ENCODE measurements at regions of chr3 and their contacts with region 1.

Region 1: GRCh38 chr3:12455740-12456139 is 28.5 kb upstream of the TSEN2 start:
- DNase-seq: peak; percentile 15

Region 2: GRCh38 chr3:12073106-12073505 is 382.6 kb before region 1 on chr3:
- intact Hi-C with region 1: loop called in 1 of 2 experiments (anchors 2 kb)
- DNase-seq: no peak

Measured in posterior vena cava (tissue), 2 donors.